MCF 10A (cell line): ENCODE measurements at regions of chr12 and their contacts with region 1.

Region 1: DNA sequence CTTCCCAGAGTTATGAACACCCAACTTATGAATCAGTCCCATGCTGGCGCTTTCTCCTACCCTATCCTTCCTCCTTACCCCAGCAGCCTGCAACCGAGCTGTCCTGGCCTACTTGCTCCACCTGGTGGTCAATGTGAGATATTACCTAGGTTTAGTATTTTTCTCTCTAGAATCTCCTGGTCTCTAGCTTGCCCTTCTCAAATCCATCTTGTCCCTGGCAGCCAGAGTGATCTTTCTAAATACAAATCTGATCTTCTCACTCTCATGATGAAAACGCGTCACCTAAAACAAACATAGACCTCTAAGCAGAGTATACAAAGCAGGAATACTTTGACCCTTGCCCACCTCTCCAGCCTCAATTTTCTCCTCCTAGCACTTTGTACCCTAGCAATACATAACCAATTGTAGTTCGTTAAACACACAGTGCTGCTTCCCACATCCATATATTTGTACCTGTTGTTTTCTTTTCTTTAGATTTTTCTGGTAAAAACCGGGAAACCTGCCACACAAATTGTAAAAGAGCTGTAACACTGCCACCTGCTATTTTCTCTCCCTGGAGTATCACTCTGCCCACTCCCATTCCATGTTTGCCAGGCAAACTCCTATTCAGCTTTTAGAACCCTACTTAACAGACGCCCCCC is 20.0 kb upstream of the TCP11L2 start:
- DNase-seq: peak; percentile 83
- H3K4me3 Mint-ChIP-seq: no peak overlapping the region
- H3K27ac Mint-ChIP-seq: no peak overlapping the region
- H3K4me1 Mint-ChIP-seq: peaks cover 15% of the 10 kb centered on the region
- H3K27me3 Mint-ChIP-seq: no peaks in the 10 kb centered on the region
- CTCF ChIP-seq: peak; percentile 76

Region 2: DNA sequence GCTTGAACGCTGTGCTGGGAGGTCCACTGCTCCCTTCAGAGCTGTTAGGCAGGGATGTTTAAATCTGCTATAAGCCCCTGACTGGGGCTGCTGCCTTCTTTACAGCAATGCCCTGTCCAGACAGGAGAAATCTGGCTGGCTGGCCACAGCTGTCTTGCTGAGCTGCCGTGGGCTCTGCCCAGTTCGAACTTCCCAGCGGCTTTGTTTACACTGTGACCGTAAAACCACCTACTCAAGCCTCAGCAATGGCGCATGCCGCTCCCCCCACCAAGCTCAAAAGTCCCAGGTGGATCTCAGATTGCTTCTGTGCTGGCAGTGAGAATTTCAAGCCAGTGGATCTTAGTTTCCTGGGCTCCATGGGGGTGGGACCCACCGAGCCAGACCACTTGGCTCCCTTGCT is 70.6 kb before region 1 on chr12:
- CTCF ChIA-PET with region 1: no interaction called
- POLR2A ChIA-PET with region 1: no interaction called
- intact Hi-C with region 1: no loop called
- DNase-seq: no peak
- H3K4me3 Mint-ChIP-seq: no peak overlapping the region
- H3K27ac Mint-ChIP-seq: no peak overlapping the region
- H3K4me1 Mint-ChIP-seq: no peaks in the 10 kb centered on the region
- H3K27me3 Mint-ChIP-seq: peaks cover 69% of the 10 kb centered on the region
- CTCF ChIP-seq: no peak

Region 3: GRCh38 chr12:106247674-106248311 is 34.8 kb before region 1 on chr12 and contains the start of gene CKAP4:
- CTCF ChIA-PET with region 1: interaction called, 15 read pairs
- POLR2A ChIA-PET with region 1: interaction called, 12 read pairs
- intact Hi-C with region 1: loop called (anchors 1 kb)
- DNase-seq: peak; percentile 72
- H3K4me3 Mint-ChIP-seq: peak within 1 kb of the TSS; percentile 76
- H3K27ac Mint-ChIP-seq: peak within 1 kb of the TSS; percentile 23
- H3K4me1 Mint-ChIP-seq: peaks cover 23% of the 10 kb centered on the region
- H3K27me3 Mint-ChIP-seq: no peaks in the 10 kb centered on the region
- CTCF ChIP-seq: no peak
- total RNA-seq, gene CKAP4: 101 and 118 TPM in 2 replicates

Region 4: GRCh38 chr12:106271575-106272505 is 10.7 kb before region 1 on chr12:
- CTCF ChIA-PET with region 1: interaction called, 34 read pairs
- POLR2A ChIA-PET with region 1: interaction called, 4 read pairs
- intact Hi-C with region 1: no loop called
- DNase-seq: peak; percentile 40
- H3K4me3 Mint-ChIP-seq: no peak overlapping the region
- H3K27ac Mint-ChIP-seq: no peak overlapping the region
- H3K4me1 Mint-ChIP-seq: no peaks in the 10 kb centered on the region
- H3K27me3 Mint-ChIP-seq: no peaks in the 10 kb centered on the region
- CTCF ChIP-seq: no peak

Region 5: GRCh38 chr12:106296193-106296877 is 13.8 kb after region 1 on chr12:
- CTCF ChIA-PET with region 1: interaction called, 13 read pairs
- POLR2A ChIA-PET with region 1: interaction called, 12 read pairs
- intact Hi-C with region 1: no loop called
- DNase-seq: peak; percentile 80
- H3K4me3 Mint-ChIP-seq: no peak overlapping the region
- H3K27ac Mint-ChIP-seq: peak overlapping the region; percentile 57
- H3K4me1 Mint-ChIP-seq: peaks cover 12% of the 10 kb centered on the region
- H3K27me3 Mint-ChIP-seq: no peaks in the 10 kb centered on the region
- CTCF ChIP-seq: no peak

Region 6: GRCh38 chr12:106302401-106303201 is 20.0 kb after region 1 on chr12 and contains the start of gene TCP11L2:
- CTCF ChIA-PET with region 1: interaction called, 13 read pairs
- POLR2A ChIA-PET with region 1: interaction called, 12 read pairs
- intact Hi-C with region 1: no loop called
- DNase-seq: peak; percentile 79
- H3K4me3 Mint-ChIP-seq: peak within 1 kb of the TSS; percentile 89
- H3K27ac Mint-ChIP-seq: peak within 1 kb of the TSS; percentile 100
- H3K4me1 Mint-ChIP-seq: peaks cover 23% of the 10 kb centered on the region
- H3K27me3 Mint-ChIP-seq: no peaks in the 10 kb centered on the region
- CTCF ChIP-seq: no peak
- total RNA-seq, gene TCP11L2: 10.2 and 11.4 TPM in 2 replicates